IMR-90 (cell line): ENCODE measurements at regions of chrX and their contacts with region 1.

Region 1: DNA sequence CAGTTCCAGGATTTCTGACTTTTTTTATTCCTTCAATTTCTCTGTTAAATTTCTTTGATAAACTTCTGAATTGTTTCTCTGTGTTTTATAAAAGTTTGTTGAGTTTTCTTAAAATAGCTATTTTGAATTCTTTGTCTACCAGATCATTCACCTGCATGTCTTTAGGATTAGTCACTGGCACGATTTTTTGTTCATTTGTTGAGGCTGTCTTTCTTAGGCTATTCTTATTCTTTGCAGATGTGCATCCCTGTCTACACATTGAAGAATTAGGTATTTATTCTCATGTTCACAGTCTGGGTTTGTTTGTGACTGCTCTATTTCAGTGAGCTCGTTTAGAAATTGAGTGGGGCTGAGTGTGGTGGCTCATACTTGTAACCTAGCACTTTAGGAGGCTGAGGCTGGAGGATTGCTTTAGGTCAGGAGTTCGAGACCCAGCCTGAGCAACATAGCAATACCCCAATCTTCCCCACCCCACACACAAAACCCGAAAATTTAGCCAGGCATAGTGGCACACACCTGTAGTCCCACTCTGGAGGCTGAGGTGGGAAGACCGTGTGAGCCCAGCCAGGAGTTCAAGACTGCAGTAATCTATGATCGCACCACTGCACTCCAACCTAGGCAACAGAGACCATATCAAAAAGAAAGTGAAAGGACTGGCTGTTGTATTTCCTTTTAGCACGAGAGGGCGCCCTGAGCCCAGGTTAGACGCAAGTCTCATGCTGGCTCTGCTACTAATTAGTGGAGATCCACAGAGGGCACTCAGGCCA is 42.0 kb downstream of the F8 start:
- DNase-seq: peak; percentile 49
- ATAC-seq: peak; percentile 97
- H3K4me3 ChIP-seq: peak overlapping the region; percentile 62
- H3K27ac ChIP-seq: peak overlapping the region; percentile 45; the same call in 1 of the 2 replicates
- H3K4me1 ChIP-seq: no peaks in the 10 kb centered on the region
- H3K27me3 ChIP-seq: no peaks in the 10 kb centered on the region
- CTCF ChIP-seq: peak; percentile 74
- POLR2A ChIP-seq: no peak
- RAD21 ChIP-seq: peak; percentile 83

Region 2: GRCh38 chrX:154918060-154918483 is 62.4 kb before region 1 on chrX:
- CTCF ChIA-PET with region 1: no interaction called
- POLR2A ChIA-PET with region 1: no interaction called
- dilution Hi-C with region 1: no loop called
- in situ Hi-C with region 1: no loop called
- intact Hi-C with region 1: loop called (anchors 2 kb)
- DNase-seq: peak; percentile 80
- ATAC-seq: peak; percentile 89
- H3K4me3 ChIP-seq: 0 out of 2 replicates have a peak overlapping the region, but pooled peaks have one; percentile 6
- H3K27ac ChIP-seq: no peak overlapping the region
- H3K4me1 ChIP-seq: no peaks in the 10 kb centered on the region
- H3K27me3 ChIP-seq: no peaks in the 10 kb centered on the region
- CTCF ChIP-seq: peak; percentile 66
- POLR2A ChIP-seq: no peak
- RAD21 ChIP-seq: peak; percentile 73

Region 3: GRCh38 chrX:155056877-155057792 is 76.6 kb after region 1 on chrX:
- CTCF ChIA-PET with region 1: interaction called, 3 read pairs
- POLR2A ChIA-PET with region 1: no interaction called
- dilution Hi-C with region 1: no loop called
- in situ Hi-C with region 1: loop called (anchors 5 kb)
- intact Hi-C with region 1: loop called (anchors 1 kb)
- DNase-seq: peak; percentile 70
- ATAC-seq: peak; percentile 98
- H3K4me3 ChIP-seq: no peak overlapping the region
- H3K27ac ChIP-seq: no peak overlapping the region
- H3K4me1 ChIP-seq: no peaks in the 10 kb centered on the region
- H3K27me3 ChIP-seq: no peaks in the 10 kb centered on the region
- CTCF ChIP-seq: peak; percentile 74
- POLR2A ChIP-seq: no peak
- RAD21 ChIP-seq: peak; percentile 53

Region 4: DNA sequence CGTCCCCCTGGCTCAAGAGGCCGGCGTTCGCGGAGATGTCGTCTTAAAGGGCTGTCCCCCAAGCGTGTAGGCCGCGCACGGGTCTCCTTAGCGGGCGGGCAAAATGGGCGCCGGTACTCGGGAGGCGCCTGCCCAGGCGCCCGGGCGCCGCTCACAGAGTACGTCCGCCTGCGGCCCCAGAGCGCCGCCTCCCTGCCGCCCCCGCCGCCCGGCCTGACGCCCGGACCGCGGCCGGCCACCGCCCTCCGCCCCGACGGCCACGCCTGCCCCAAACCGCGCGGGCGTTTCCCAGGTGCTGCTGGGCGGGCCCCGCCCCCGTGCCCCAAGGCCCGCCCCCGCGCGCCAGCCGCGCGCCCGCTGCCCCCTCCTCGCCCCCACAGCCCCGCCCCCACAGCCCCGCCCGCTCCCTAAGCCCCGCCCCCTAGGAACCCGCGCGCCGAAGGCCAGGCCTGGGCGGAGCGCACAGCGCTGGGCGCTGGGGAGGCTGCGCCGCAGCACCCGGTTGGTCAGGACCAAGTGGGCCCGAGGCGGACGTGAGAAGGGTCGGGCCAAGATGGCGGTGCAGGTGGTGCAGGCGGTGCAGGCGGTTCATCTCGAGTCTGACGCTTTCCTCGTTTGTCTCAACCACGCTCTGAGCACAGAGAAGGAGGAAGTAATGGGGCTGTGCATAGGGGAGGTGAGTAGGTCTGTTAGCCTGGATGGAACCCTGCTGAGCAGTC is 90.6 kb after region 1 on chrX and contains the starts of genes BRCC3, CMC4 and MTCP1:
- CTCF ChIA-PET with region 1: no interaction called
- POLR2A ChIA-PET with region 1: no interaction called
- dilution Hi-C with region 1: no loop called
- in situ Hi-C with region 1: no loop called
- intact Hi-C with region 1: loop called (anchors 5 kb)
- DNase-seq: peak; percentile 79
- ATAC-seq: peak; percentile 95
- H3K4me3 ChIP-seq: peak within 1 kb of the TSS; percentile 59
- H3K27ac ChIP-seq: peak within 1 kb of the TSS; percentile 87
- H3K4me1 ChIP-seq: peaks cover 3% of the 10 kb centered on the region; the same call in 1 of the 2 replicates
- H3K27me3 ChIP-seq: no peaks in the 10 kb centered on the region
- CTCF ChIP-seq: no peak
- POLR2A ChIP-seq: peak; percentile 86
- RAD21 ChIP-seq: no peak
- total RNA-seq, gene BRCC3: 20.8 and 24.7 TPM in 2 replicates
- total RNA-seq, gene CMC4: 8.4 and 11.4 TPM in 2 replicates
- total RNA-seq, gene MTCP1: 0.54 and 0.56 TPM in 2 replicates

Region 5: DNA sequence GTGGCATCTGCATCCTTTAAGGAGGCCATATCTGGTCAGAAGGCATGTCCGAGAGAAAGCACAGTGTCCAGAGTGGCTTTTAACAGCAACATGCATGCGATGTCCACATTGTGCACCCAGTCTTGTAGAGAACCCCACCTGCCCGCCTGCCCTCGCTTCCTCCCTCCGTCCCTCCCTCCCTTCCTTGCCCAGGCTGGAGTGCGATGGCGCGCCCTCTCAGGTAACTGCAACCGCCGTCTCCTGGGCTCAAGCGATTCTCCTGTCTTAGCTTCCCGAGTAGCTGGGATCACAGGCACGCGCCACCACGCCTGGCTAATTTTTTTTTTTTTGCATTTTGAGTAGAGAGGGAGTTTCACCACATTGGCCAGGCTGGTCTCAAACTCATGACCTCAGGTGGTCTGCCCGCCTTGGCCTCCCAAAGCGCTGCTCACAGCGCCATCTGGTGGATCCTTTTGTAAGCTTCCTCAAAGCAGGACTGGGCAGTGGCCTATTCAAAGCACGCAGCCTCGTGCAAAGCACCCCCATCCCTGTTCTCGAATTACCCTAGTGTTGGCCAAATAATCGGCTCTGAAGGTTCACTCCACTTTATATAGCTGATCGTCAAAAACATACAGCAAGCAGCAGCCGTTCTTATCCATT is 105.8 kb after region 1 on chrX:
- CTCF ChIA-PET with region 1: no interaction called
- POLR2A ChIA-PET with region 1: no interaction called
- dilution Hi-C with region 1: no loop called
- in situ Hi-C with region 1: no loop called
- intact Hi-C with region 1: loop called (anchors 1 kb)
- DNase-seq: peak; percentile 12
- ATAC-seq: peak; percentile 32
- H3K4me3 ChIP-seq: no peak overlapping the region
- H3K27ac ChIP-seq: no peak overlapping the region
- H3K4me1 ChIP-seq: no peaks in the 10 kb centered on the region
- H3K27me3 ChIP-seq: no peaks in the 10 kb centered on the region
- CTCF ChIP-seq: peak; percentile 43
- POLR2A ChIP-seq: no peak
- RAD21 ChIP-seq: peak; percentile 46

Region 6: DNA sequence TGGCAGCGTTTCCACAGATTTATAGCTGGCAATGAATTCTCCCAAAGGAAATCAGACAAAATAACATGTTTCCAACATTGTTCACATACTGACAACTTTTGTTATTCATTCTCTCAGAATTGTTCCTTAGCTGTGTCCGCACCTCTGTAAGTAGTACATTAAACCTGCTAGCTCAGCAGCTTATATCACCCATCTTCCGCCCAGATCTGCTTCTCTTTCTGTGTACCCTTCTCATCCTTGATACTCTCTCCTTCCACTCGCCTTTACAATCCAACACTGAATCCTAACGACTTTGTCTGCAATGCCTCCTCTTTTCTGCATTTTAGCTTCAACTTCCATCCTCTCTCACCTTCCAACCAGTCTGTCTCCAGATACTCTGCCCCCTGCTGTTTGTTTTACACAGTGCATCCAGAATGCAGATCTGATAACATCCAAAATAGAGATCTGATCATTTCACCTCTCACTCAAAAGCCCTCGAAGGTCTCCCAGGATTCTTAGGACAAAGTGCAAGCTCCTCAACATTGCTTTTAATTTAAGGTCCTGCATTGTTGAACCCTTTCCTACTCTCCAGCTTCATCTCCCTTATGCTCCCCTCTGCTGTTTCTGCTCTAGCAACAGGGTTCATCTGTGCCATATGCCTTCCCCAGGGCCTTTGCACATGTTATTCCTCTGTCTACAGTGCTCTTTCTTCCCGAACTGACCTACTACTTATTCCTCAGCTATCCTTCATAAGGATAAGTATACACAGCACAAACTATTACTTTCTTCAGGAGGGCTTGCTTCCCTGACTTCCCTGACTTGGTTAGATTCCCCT is 168.4 kb after region 1 on chrX:
- CTCF ChIA-PET with region 1: interaction called, 3 read pairs
- POLR2A ChIA-PET with region 1: no interaction called
- dilution Hi-C with region 1: no loop called
- in situ Hi-C with region 1: no loop called
- intact Hi-C with region 1: loop called (anchors 1 kb)
- DNase-seq: peak; percentile 11
- ATAC-seq: no peak
- H3K4me3 ChIP-seq: no peak overlapping the region
- H3K27ac ChIP-seq: no peak overlapping the region
- H3K4me1 ChIP-seq: no peaks in the 10 kb centered on the region
- H3K27me3 ChIP-seq: no peaks in the 10 kb centered on the region
- CTCF ChIP-seq: peak; percentile 43
- POLR2A ChIP-seq: no peak
- RAD21 ChIP-seq: no peak

Region 7: DNA sequence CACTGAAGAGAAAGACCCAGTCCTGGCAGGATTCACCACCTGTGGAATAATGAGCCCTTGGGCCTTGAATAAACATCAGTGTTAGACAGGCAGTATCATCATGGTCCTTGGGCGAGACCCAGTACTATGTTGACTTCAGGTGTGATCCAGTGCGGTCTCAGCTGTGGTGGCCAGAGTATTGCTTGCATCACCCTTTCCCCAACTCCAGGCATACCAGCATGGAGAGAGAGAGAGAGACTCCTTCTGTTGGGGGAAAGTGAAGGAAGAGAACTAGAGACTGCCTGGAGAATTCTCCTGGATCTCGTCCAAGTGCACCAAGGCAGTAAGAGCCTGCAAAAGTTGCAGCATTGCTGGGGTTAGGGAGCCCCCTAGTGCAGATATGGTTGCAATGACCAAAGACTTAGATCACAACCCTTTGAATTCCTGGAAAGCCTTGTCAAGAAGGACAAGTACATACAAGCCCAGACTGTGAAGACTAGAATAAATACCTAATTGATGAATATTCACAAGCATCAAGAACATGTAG is 839.5 kb after region 1 on chrX:
- CTCF ChIA-PET with region 1: no interaction called
- POLR2A ChIA-PET with region 1: no interaction called
- dilution Hi-C with region 1: no loop called
- in situ Hi-C with region 1: no loop called
- intact Hi-C with region 1: loop called (anchors 2 kb)
- DNase-seq: peak; percentile 85
- ATAC-seq: peak; percentile 95
- H3K4me3 ChIP-seq: no peak overlapping the region
- H3K27ac ChIP-seq: no peak overlapping the region
- H3K4me1 ChIP-seq: no peaks in the 10 kb centered on the region
- H3K27me3 ChIP-seq: no peaks in the 10 kb centered on the region
- CTCF ChIP-seq: peak; percentile 72
- POLR2A ChIP-seq: no peak
- RAD21 ChIP-seq: peak; percentile 91